ENCODE measurements at regions of chr3 and their contacts with region 1.

Region 1: GRCh38 chr3:194333212-194333980 is 17.7 kb downstream of the CPN2 start:
- DNase-seq: peak; percentile 76
- ATAC-seq: peak; percentile 94
- H3K4me3 ChIP-seq: peak overlapping the region; percentile 42 to 49
- H3K27ac ChIP-seq: no peak overlapping the region; the same call in 1 of the 2 replicates
- H3K4me1 ChIP-seq: peaks cover 14 to 35% of the 10 kb centered on the region in 2 experiments; a peak in 3 of 4 replicates
- H3K27me3 ChIP-seq: no peaks in the 10 kb centered on the region
- CTCF ChIP-seq: peak in 2 of 3 experiments; percentile 89 to 97; a peak in 4 of 6 replicates
- POLR2A ChIP-seq: no peak
- RAD21 ChIP-seq: no peak

Region 2: DNA sequence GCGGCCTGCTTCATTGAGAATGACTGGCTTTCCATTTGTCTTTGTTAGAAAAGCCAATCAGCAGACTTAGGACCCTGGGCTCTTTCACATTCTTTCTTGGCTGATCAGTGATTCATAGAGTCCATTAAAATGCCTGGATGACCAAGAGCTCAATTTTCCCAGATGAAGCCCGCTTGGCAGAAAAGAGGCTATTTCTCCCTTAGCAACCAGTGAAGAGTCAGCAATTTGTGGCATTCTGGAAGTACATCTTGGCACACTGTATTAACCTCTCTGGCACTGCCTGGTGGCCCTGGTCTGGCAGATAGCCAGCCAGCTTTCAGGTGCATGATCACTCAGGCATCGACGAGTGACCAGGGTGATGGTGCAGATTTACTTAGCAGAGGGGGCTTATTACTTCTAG is 1238.0 kb before region 1 on chr3:
- CTCF ChIA-PET with region 1: no interaction called
- POLR2A ChIA-PET with region 1: no interaction called
- RAD21 ChIA-PET with region 1: no interaction called
- intact Hi-C with region 1: no loop called
- DNase-seq: no peak
- ATAC-seq: no peak
- H3K4me3 ChIP-seq: no peak overlapping the region
- H3K27ac ChIP-seq: no peak overlapping the region
- H3K4me1 ChIP-seq: no peaks in the 10 kb centered on the region
- H3K27me3 ChIP-seq: peaks cover 15% of the 10 kb centered on the region
- CTCF ChIP-seq: no peak
- POLR2A ChIP-seq: no peak
- RAD21 ChIP-seq: no peak

Region 3: DNA sequence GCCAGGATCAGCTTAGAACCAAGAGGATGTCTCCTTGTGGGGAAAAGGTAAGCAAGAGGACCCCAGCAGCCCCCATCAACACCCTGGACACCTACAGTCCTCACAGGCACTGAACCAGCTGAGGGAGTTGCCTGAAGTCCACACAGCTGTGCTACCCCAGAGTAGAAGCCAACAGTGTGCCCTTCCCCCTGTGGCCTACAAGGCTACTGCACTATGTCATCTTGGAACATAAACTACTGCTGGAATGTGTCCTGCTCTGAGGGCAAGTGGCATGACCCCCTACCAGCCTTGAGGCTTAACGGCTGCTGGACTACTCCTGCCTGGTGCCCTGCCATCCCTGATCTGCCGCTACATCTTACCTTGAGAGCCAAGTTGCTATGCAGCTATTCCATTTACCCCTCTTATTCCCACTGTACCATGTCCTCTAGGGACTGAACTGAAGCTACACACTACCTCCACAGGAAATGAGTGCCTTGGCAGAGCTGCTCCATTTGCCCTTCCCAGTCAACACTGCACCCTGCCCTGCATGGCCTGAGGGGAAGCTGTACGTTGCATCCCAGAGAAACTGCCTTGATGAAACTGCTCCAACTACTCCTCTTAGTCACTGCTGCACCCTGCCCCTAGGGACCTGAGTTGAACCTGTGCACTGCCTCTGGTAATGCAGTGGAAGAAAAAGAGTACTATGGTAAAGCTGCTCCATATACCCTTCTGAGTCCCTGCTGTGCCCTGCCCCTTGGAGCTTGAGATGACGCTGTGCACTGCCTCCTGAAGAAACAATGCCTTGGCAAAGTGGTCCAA is 914.6 kb before region 1 on chr3:
- CTCF ChIA-PET with region 1: no interaction called
- POLR2A ChIA-PET with region 1: no interaction called
- RAD21 ChIA-PET with region 1: no interaction called
- intact Hi-C with region 1: no loop called
- DNase-seq: no peak
- ATAC-seq: no peak
- H3K4me3 ChIP-seq: no peak overlapping the region
- H3K27ac ChIP-seq: no peak overlapping the region
- H3K4me1 ChIP-seq: no peaks in the 10 kb centered on the region
- H3K27me3 ChIP-seq: no peaks in the 10 kb centered on the region
- CTCF ChIP-seq: no peak
- POLR2A ChIP-seq: no peak
- RAD21 ChIP-seq: no peak

Region 4: DNA sequence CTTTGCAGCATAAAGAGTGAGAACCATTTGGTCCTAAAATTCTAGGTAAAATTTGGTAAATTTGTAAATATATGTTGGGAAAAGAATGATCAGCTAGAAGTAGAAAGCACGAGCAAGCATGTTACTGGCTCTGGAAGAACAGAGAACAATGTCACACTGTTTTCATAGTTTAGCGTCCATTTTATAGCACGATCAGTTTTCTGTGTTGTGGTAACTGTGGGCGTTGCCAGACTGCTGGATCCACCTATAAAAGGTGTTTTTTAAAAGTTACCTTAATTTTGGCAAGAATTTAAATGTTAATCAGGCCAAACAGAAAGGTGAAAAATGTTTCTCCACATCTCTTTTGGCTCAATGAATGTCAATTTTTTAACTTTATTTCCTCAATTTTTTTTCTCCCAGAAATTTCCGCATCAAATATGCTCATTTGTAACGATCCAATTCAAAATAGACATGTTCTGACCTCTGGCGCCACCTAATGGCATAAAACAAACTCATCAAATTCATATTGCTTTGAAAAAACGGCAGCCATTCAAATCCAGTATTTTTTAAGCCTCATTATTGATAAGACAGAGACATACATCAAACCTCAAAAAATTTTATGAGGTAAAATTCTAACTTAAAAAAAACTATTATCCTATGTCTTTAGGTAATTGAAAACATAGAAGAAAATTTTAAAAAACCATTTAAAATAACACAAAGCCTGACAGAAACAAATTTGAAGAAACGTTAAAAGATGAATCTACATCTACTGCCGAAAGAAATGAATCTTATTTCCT is 71.2 kb after region 1 on chr3:
- CTCF ChIA-PET with region 1: interaction called, 5 read pairs
- POLR2A ChIA-PET with region 1: no interaction called
- RAD21 ChIA-PET with region 1: no interaction called
- intact Hi-C with region 1: loop called (anchors 1 kb)
- DNase-seq: peak; percentile 49
- ATAC-seq: peak; percentile 69
- H3K4me3 ChIP-seq: no peak overlapping the region
- H3K27ac ChIP-seq: no peak overlapping the region
- H3K4me1 ChIP-seq: no peaks in the 10 kb centered on the region; a peak in 1 of 4 replicates
- H3K27me3 ChIP-seq: no peaks in the 10 kb centered on the region
- CTCF ChIP-seq: peak; percentile 50 to 81 (median 64)
- POLR2A ChIP-seq: no peak
- RAD21 ChIP-seq: peak; percentile 74

Region 5: DNA sequence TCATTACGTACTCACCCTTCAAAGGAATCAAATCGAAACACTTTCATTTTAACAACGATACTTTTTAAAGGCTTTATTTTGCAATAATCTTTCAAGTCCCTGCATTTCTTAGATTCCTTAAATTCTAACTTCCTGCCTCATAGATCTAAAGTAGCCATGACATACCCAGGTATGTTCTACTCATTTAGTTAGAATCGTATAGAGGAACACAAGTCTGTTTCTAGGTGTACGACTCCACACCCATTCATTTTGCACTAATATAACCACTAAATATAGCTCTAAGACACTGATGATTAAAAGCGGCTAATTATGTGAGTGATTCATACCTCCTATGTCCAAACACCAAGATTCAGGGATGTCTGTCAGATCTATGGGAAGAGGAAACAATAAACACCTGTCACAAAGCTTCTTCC is 152.1 kb after region 1 on chr3:
- CTCF ChIA-PET with region 1: no interaction called
- POLR2A ChIA-PET with region 1: no interaction called
- RAD21 ChIA-PET with region 1: no interaction called
- intact Hi-C with region 1: no loop called
- DNase-seq: no peak
- ATAC-seq: no peak
- H3K4me3 ChIP-seq: peak overlapping the region; percentile 73 to 84
- H3K27ac ChIP-seq: peak overlapping the region; percentile 33; the same call in 1 of the 2 replicates
- H3K4me1 ChIP-seq: peaks cover 35 to 83% of the 10 kb centered on the region in 2 experiments
- H3K27me3 ChIP-seq: no peaks in the 10 kb centered on the region
- CTCF ChIP-seq: no peak
- POLR2A ChIP-seq: no peak
- RAD21 ChIP-seq: no peak

Region 6: DNA sequence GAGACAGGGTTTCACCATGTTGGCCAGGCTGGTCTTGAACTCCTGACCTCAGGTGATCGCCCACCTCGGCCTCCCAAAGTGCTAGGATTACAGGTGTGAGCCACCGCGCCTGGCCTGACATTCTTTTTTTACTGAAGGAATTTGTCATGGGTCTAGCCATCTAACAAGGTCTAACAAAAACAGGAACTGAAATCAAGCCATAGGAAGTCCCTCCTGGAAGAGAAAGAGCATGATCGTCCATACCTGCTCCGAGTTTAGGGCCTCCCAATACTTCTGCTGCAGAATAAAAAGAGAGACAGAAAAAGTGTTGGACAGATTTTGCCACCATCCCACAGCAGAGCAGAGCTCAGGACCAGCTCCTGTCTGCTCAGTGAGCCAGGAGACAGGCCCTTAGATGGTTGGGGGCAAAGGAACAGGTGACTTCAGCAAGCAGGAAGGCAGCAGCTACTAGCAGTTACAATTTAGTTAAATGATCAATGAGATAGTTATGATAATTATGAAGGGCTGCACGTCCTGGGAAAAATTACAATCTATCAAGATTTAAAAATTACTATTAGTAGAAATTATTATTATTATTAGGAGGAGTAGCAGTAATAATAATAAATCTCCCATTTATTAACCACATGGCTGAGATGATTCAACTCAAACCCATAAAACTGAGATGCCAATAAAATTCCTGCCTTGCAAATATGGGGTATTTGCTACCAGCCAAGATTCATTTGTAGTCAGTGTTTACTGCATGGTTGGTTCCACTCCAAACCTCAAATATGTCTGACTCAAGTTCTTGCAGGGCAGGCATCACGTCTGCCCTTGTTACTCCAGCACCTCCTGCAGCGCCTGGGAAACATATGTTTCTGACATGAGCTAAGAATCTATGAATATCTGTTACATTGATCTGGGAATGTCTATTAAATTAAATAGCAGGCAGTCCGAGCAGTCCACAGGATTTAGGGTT is 259.7 kb after region 1 on chr3:
- CTCF ChIA-PET with region 1: interaction called, 6 read pairs
- POLR2A ChIA-PET with region 1: no interaction called
- RAD21 ChIA-PET with region 1: interaction called, 3 to 4 read pairs
- intact Hi-C with region 1: loop called (anchors 1 kb)
- DNase-seq: peak; percentile 91
- ATAC-seq: peak; percentile 89
- H3K4me3 ChIP-seq: no peak overlapping the region
- H3K27ac ChIP-seq: no peak overlapping the region
- H3K4me1 ChIP-seq: peaks cover 15 to 25% of the 10 kb centered on the region in 2 experiments
- H3K27me3 ChIP-seq: no peaks in the 10 kb centered on the region
- CTCF ChIP-seq: peak in 1 of 3 experiments; percentile 15; a peak in 1 of 6 replicates
- POLR2A ChIP-seq: no peak
- RAD21 ChIP-seq: peak; percentile 50

Region 7: GRCh38 chr3:195259475-195260279 is 926.3 kb after region 1 on chr3:
- CTCF ChIA-PET with region 1: no interaction called
- POLR2A ChIA-PET with region 1: no interaction called
- RAD21 ChIA-PET with region 1: no interaction called
- intact Hi-C with region 1: loop called (anchors 10 kb)
- DNase-seq: peak; percentile 63
- ATAC-seq: peak; percentile 76
- H3K4me3 ChIP-seq: peak overlapping the region; percentile 51 to 66
- H3K27ac ChIP-seq: peak overlapping the region; percentile 92
- H3K4me1 ChIP-seq: peaks cover 19 to 28% of the 10 kb centered on the region in 2 experiments
- H3K27me3 ChIP-seq: no peaks in the 10 kb centered on the region
- CTCF ChIP-seq: peak in 2 of 3 experiments; percentile 28 to 37; a peak in 4 of 6 replicates
- POLR2A ChIP-seq: no peak
- RAD21 ChIP-seq: peak; percentile 51

Measured in HCT116 (cell line).